GM18951 (cell line): ENCODE measurements at regions of chr11 and their contacts with region 1.

Region 1: DNA sequence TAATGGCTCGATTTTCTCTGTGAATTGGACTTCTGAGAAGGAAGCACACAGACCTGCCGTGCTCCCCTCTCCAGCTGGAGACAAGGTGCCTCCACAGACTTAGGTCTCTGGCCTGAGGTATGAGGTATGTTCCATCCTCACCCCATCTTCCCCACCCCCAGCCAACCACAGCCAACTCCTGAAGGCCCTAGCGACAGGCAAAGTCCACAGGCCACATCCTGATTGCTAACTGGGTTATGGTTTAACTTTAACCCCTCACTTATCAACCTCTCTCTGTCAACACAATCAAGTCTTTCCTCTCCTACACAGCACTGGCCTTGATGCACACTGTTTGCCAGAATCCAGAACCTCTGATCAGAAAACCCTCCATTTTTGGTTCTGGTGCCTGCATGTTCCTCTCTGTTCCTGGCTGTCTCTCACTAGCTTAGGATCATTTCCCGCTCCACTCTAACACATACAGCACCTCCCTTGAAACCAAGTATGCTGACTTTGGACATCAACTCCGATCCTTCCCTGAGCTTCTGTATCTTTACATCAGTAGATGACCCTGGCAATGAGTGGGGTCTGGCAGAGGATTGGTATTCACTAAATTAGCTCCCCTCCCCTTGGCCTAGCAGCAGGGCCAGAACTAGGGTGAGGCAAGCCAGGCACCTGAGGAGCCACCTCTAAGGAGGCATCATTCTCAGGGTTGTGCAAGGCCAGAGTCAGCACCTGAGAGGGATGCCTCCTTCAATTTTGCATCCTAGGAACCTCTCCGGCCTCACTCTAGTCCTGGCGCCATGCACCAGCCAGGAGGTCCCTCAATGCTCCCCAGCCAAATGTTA is 22.0 kb downstream of the JAML start:
- POLR2A ChIP-seq: no peak

Region 2: DNA sequence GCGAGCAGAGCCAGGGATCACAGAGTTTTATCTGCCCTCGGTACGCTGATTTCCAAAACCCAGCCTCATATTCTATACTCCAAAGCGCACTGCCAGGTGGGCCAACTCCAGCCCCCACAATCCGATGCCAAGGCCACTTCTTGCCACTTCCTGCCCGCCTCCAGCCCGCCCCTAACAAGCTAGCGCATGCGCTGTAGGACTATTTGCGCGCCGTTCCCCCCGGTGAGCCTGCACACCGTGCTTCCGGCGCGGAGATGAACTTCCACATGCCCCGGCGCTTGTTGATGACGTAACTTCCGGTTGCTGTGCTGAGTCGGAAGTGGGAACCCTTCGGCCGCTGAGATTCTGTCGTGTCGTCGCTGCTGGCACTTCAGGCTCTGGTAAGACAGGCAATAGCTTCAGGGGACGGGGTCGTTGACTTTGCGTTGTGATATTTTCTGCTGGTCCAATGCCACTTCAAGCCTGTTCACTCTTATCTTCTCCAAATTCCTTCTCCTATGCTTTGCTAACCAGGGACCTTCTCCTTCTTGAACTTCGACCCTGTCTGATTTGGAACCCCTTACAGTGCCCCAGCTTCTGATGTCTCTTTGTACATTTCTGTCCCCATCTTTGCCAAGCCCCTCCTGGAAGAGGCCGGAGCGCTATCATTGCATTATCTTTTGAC is 156.6 kb after region 1 on chr11 and contains the start of gene UBE4A:
- in situ Hi-C with region 1: loop called (anchors 10 kb)
- POLR2A ChIP-seq: peak; percentile 97

Region 3: DNA sequence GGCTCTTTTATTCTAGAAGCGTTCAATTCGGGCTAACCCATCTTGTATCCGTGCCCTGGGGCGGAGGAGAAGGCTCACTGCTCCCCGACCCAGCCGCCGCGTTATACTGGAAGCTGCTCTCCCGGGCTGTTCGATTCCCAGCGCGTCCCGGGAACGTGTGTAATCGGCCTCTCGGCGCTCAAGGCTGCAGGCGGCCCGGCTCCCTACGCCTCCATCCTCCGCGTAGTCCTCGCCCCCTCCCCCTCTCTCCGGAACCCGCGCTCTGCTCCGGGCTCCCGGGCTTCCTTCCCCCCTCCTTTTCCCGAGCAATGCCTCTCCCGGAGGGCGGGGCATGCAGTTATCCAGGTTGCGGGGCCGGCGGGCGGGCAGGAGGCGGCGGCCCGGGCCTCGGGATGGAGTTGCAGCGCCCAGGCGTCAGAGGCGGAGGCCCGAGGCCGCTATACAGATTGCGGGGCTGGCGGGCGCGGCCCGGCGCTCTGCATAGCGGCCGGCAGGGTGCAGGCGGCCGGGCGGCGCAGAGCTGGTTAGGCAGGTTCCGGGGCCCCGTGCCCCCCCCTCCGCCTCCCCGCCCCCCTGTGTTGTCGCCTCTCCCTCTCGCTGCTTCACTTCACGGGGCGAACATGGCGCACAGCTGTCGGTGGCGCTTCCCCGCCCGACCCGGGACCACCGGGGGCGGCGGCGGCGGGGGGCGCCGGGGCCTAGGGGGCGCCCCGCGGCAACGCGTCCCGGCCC is 233.2 kb after region 1 on chr11 and contains the start of gene KMT2A:
- in situ Hi-C with region 1: no loop called
- POLR2A ChIP-seq: peak; percentile 52

Region 4: DNA sequence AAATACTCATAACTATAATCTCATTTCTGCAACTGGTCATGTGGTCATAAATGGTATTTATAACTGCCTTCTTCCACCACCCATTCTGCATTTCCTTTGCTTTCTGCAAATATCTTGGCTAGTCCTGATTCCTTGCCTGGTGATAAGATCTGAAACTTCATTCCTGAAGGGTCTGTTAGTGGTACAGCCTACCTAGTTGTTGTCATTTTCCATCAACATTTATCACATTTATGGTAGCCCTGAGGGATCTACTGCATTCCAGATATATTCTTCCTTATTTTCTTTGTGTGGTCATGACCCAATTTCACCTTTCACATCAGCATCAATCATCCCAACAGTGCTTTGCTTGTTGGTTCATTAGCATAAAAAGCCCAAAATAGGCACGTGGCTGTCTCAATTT is 538.1 kb after region 1 on chr11:
- in situ Hi-C with region 1: no loop called
- POLR2A ChIP-seq: no peak